ENCODE measurements at regions of chr7 and their contacts with region 1.

Region 1: GRCh38 chr7:27210441-27211083 is 10.7 kb upstream of the HOXA13 start:
- DNase-seq: no peak
- H3K4me3 ChIP-seq: peak overlapping the region; percentile 23; the same call in 1 of the 2 replicates
- CTCF ChIP-seq: peak; percentile 77

Region 2: GRCh38 chr7:27031289-27032172 is 179.0 kb before region 1 on chr7:
- CTCF ChIA-PET with region 1: no interaction called
- POLR2A ChIA-PET with region 1: no interaction called
- DNase-seq: peak; percentile 33
- H3K4me3 ChIP-seq: no peak overlapping the region
- CTCF ChIP-seq: no peak

Region 3: DNA sequence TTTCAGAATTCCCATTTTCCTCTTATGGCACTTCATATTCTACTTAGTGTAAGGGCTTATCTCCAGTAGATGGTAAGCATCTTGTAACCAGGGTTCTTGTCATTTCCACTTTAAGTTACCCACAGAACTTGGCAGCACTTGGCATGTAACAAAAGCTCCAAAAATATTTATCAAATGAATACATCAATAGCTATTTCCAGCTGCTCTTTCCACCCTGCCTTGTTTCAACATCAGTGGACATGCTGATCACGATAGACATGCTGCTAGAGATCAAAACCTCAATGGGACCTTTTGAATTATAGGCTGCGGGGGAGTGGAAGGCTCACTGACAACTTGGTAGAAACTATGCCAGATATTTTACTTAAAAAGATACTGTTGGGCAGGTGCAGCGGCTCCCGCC is 147.6 kb before region 1 on chr7:
- CTCF ChIA-PET with region 1: no interaction called
- POLR2A ChIA-PET with region 1: no interaction called
- DNase-seq: no peak
- H3K4me3 ChIP-seq: no peak overlapping the region
- CTCF ChIP-seq: no peak

Region 4: DNA sequence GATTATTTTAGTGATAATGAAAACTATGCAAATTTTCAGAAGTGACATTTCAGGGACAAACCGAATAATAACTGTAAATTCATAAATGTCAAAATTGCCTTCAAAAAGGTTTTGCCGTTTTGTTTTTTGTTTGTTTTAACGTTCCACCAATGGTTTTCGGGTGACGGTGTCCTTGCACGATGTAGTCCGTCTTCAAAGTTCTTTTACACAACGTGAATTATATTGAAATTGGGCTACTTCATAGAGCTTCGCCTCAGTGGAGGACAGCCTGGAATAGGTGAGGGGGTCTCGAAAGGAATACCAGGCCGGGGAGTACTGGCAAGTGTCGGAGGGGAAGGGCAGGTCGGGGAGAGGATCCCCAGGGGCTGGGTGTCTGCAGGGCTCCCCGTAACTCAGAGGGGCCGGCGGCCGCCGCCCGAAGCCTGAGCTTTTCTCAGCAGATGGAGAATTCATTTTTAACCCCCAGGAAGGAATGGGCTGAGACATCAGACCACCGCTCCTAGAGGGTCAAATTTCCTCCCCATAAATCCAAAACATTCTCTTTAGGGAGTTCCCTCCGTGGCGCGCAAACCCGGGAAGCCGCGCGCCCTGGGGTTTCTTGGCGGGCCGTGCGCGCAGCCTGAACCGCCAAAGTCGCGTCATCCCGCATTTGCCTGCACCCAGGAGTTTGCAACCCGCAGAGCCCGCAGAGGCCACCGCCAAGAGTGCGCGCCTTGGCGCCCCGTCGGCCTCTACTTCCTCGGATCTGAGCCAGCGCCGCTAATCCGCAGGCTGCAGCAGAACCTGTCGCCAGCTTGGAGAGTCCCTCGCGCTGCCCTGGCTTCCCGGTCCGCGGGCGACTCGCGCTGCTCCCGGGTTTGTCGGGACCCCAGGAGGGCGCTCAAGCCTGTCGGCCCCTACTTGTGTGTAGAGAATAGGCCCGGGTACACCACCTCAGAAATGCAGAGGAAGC is 14.7 kb after region 1 on chr7:
- CTCF ChIA-PET with region 1: interaction called, 21 read pairs
- POLR2A ChIA-PET with region 1: no interaction called
- DNase-seq: no peak
- H3K4me3 ChIP-seq: no peak overlapping the region
- CTCF ChIP-seq: no peak

Region 5: DNA sequence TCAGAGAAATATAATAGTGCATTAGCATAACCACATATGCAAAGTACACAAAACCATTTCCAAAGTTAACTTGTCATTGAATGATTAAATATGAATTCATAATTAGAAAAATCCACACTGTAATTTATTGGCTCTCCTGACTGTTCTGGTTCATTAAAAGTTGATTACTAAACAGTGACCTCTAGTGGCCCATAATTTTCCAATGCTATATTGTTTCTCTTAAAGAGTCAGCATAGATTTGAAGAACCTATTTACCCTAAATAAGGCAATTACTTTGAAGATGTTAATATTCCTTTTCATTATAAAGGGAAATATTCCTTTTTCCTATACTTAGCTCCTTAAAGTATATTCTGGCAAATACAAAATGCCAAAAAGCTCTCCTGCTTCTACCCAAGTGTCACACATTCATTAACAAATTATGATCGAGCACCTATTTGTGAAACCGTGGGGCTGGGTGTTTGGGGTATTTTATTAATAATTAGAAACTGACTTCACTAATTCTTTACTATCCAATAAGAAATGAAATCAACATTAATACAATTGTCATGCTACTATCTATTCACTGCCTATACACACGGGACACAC is 365.9 kb after region 1 on chr7:
- CTCF ChIA-PET with region 1: interaction called, 83 read pairs
- POLR2A ChIA-PET with region 1: no interaction called
- DNase-seq: no peak
- H3K4me3 ChIP-seq: no peak overlapping the region
- CTCF ChIP-seq: peak; percentile 37

Region 6: DNA sequence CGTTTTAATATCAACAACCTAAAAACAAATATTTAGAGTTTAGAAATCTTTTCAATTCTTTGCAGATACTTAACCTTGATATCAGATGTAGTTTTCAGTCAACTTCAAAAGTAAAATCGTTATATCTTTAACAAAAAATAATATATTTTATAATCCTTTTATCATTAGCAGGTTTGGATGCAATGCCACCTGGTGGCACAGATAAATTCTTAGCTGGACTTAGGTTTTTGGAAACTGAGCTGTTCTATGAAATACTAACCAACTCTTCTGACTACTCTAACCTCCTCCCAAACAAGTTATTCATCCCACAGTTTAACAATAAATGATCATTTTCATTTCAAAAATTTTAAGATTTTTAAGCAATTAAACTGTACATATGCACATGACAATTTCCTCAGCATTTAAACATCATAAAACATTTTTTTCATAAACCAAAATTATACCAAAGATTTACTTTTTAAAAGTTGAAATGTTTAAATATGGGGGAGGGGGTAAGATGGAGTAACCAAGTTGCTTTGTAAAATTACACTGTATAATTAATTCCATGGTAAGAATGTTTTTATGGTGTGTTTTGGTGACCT is 395.2 kb after region 1 on chr7:
- CTCF ChIA-PET with region 1: interaction called, 20 read pairs
- POLR2A ChIA-PET with region 1: no interaction called
- DNase-seq: no peak
- H3K4me3 ChIP-seq: no peak overlapping the region
- CTCF ChIP-seq: no peak

Region 7: DNA sequence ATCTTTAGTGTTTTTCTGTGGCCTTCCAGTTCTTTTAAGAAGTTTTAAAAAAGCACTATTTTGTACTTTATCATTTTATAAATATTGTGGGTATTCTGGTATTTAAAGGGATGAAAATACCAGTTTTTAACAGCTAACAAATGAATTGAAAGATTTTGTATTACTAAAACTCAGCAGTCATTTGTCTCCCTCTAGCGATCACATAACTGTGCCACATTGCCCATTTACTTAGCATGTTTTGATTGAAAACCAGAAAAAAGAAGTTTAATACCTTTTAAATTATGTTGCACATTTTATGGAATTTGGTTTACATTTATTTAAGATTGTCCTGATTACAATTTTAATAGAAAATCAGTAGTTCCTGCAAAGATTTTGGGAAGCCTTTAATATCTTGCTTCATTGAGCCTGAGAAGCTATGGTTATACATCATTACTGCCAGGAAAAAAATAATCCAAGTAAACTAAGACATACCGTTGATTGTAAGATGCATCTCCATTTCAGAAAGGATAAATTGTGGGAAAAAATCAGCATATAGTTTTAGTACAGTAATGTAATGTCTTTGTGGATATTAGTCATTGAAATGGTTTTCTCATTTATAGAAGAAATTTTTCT is 564.3 kb after region 1 on chr7:
- CTCF ChIA-PET with region 1: interaction called, 19 read pairs
- POLR2A ChIA-PET with region 1: no interaction called
- DNase-seq: no peak
- H3K4me3 ChIP-seq: no peak overlapping the region
- CTCF ChIP-seq: peak; percentile 58

Region 8: DNA sequence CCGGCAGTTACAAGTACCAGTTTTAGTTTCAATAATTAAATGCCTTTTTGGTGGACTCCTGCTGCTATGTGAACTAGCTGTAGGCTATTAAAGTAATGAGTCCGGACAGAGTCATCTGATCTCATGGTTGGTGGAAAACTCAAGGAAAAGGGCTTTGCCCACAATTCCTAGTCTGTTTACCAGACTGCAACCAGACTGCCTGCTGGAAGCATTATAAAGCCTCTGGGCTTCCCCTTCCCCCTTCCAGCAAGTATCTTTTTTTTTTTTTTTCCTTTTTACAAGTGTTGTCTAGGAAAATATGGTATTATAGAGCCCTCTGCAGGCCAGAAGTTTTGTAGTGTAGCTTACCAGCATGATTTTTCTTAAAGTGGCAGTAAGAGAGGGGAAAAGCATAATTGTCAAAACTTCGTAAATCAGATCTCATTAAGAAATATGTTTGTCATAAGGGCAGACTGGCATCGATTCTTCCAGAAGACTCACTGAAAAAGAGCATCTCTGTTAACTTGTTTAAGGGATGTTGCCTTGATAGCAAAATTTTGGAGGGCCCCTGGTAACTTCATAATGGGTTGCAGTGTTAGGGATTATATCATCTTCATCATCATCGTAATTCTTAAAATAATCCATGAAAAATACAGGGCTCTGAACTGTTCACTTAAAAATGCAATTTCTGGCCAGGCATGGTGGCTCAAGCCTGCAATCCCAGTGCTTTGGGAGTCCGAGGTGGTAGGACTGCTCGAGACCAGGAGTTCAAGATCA is 710.7 kb after region 1 on chr7:
- CTCF ChIA-PET with region 1: interaction called, 10 read pairs
- POLR2A ChIA-PET with region 1: no interaction called
- DNase-seq: peak; percentile 71
- H3K4me3 ChIP-seq: no peak overlapping the region
- CTCF ChIP-seq: peak; percentile 18